ENCODE measurements at regions of chr11 and their contacts with region 1.

Region 1: DNA sequence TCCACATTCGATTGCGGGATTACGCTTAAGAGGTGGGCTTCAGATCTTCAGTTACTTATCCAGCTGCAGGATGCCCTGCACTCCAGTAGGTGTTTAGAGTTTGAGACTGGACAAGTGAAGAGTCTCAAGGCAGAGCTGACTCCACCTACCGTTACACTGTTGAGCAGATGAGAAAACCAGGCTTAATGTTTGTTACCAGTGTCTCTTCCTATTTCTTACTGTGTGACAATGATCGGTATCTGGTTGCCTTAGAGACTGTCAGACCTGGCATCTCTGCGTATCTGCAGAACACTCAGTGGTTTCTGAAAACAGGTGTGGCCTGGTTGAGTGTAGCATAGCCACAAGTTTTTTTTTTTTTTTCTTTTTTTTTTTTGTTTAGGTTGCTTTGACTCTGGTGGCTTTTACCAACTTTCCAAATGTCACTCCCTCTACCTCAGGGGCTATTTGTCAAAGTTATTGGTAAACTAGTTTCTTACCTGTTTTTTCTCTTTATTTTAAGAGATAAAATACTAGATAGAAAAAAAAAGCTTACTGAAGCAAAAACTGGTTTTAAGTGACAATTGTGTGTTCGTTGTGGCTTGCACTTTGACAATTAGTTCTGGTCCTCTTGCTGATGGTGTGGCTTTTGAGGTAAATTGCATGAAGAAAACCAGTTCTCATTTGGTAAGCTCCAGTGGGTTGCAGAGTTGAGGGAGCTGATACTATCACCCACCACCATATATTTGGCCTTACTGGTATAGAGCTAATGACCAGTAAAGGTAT is 284.8 kb downstream of the ETS1 start:
- DNase-seq: peak in 34 of 35 experiments; percentile 47 to 94 (median 74)
- ATAC-seq: peak; percentile 85 to 90 (median 88)
- H3K4me3 ChIP-seq: peak overlapping the region; percentile 56 to 60
- H3K4me3 Mint-ChIP-seq: peak overlapping the region; percentile 83 to 91 (median 84)
- H3K27ac ChIP-seq: peak overlapping the region; percentile 99
- H3K27ac Mint-ChIP-seq: peak overlapping the region; percentile 98
- H3K4me1 ChIP-seq: peaks cover 72 to 80% of the 10 kb centered on the region in 2 experiments
- H3K4me1 Mint-ChIP-seq: peaks cover 90 to 97% (median 95%) of the 10 kb centered on the region in 3 donors
- H3K27me3 ChIP-seq: no peaks in the 10 kb centered on the region
- H3K27me3 Mint-ChIP-seq: no peaks in the 10 kb centered on the region

Region 2: DNA sequence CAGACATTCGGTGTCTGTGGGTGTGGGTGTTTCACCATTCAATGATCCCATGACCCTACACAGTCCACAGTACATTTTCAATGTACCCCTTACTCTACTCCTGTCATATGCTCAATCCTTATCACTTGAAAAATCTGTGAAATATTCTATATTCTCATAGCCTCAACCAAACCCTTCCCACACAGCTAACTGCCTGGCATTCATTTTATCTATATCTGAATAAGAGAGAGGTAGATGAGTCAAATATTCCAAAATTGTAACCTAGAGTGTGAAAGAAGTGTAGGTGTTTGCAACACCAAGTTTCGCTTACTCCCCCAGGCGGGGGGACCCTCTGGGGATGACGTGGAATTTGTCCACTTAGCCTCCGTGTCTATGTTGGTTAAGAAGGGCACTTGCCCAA is 70.0 kb before region 1 on chr11:
- CTCF ChIA-PET with region 1: no interaction called
- POLR2A ChIA-PET with region 1: no interaction called
- DNase-seq: no peak
- ATAC-seq: no peak
- H3K4me3 ChIP-seq: no peak overlapping the region
- H3K4me3 Mint-ChIP-seq: no peak overlapping the region
- H3K27ac ChIP-seq: no peak overlapping the region
- H3K27ac Mint-ChIP-seq: peak overlapping the region in 1 of 2 donors; percentile 14
- H3K4me1 ChIP-seq: no peaks in the 10 kb centered on the region
- H3K4me1 Mint-ChIP-seq: no peaks in the 10 kb centered on the region
- H3K27me3 ChIP-seq: no peaks in the 10 kb centered on the region
- H3K27me3 Mint-ChIP-seq: no peaks in the 10 kb centered on the region

Region 3: GRCh38 chr11:128290106-128290840 is 12.3 kb before region 1 on chr11:
- CTCF ChIA-PET with region 1: interaction called, 4 to 40 read pairs
- POLR2A ChIA-PET with region 1: interaction called, 5 to 52 read pairs
- DNase-seq: peak; percentile 55 to 94 (median 67)
- ATAC-seq: peak; percentile 71 to 75 (median 72)
- H3K4me3 ChIP-seq: peak overlapping the region; percentile 54 to 60
- H3K4me3 Mint-ChIP-seq: peak overlapping the region; percentile 87 to 91 (median 91)
- H3K27ac ChIP-seq: peak overlapping the region; percentile 99
- H3K27ac Mint-ChIP-seq: peak overlapping the region; percentile 98 to 100
- H3K4me1 ChIP-seq: peaks cover 58 to 67% of the 10 kb centered on the region in 2 experiments
- H3K4me1 Mint-ChIP-seq: peaks cover 93 to 100% (median 98%) of the 10 kb centered on the region in 3 donors
- H3K27me3 ChIP-seq: no peaks in the 10 kb centered on the region
- H3K27me3 Mint-ChIP-seq: no peaks in the 10 kb centered on the region

Region 4: GRCh38 chr11:128323381-128323780 is 20.8 kb after region 1 on chr11:
- CTCF ChIA-PET with region 1: interaction called, 6 to 29 read pairs
- POLR2A ChIA-PET with region 1: interaction called, 6 to 35 read pairs
- DNase-seq: peak in 25 of 35 experiments; percentile 25 to 77 (median 45)
- ATAC-seq: peak in 1 of 4 experiments; percentile 12
- H3K4me3 ChIP-seq: no peak overlapping the region
- H3K4me3 Mint-ChIP-seq: peak overlapping the region in 2 of 3 donors; percentile 37 to 71
- H3K27ac ChIP-seq: peak overlapping the region; percentile 98
- H3K27ac Mint-ChIP-seq: peak overlapping the region; percentile 97 to 99
- H3K4me1 ChIP-seq: peaks cover 74 to 83% of the 10 kb centered on the region in 2 experiments
- H3K4me1 Mint-ChIP-seq: peaks cover 87 to 92% (median 90%) of the 10 kb centered on the region in 3 donors
- H3K27me3 ChIP-seq: no peaks in the 10 kb centered on the region
- H3K27me3 Mint-ChIP-seq: no peaks in the 10 kb centered on the region

Region 5: DNA sequence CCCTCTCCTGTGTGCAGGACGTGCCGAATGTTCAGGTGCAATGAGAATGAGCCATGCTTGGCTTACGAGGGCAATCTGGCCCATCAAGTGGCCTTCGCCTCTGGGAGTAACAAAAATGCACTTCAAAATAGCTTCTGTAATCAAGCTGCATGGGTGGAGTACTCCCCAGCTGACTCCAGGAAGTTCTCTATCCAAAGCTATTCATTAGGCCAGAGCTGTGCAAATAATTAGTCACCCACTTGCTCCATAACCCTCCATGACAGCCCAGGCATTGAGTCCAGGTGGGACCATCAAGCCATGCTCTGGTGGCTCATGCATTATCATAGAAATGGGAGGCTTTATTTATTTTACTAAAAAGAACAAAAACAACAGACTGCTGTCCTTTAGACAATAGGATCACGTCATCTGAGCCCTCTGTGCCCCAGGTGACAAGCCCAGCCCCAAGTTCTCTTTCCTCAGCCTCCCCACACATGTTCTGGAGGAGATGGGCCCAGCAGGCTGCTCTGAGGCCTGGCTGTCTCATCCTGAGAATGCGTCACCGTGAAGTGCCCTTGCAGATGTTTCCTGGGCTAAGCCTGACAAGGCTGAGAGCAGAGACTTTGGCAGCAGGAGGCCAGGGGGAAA is 40.0 kb after region 1 on chr11:
- CTCF ChIA-PET with region 1: interaction called in 1 of 2 experiments, 9 read pairs
- POLR2A ChIA-PET with region 1: interaction called in 1 of 2 experiments, 10 read pairs
- DNase-seq: peak in 31 of 35 experiments; percentile 19 to 74 (median 45)
- ATAC-seq: peak; percentile 41 to 71 (median 52)
- H3K4me3 ChIP-seq: no peak overlapping the region
- H3K4me3 Mint-ChIP-seq: peak overlapping the region in 1 of 3 donors; percentile 87
- H3K27ac ChIP-seq: peak overlapping the region; percentile 98
- H3K27ac Mint-ChIP-seq: peak overlapping the region; percentile 98 to 99
- H3K4me1 ChIP-seq: peaks cover 55 to 68% of the 10 kb centered on the region in 2 experiments
- H3K4me1 Mint-ChIP-seq: peaks cover 89 to 95% (median 92%) of the 10 kb centered on the region in 3 donors
- H3K27me3 ChIP-seq: no peaks in the 10 kb centered on the region
- H3K27me3 Mint-ChIP-seq: no peaks in the 10 kb centered on the region

Region 6: GRCh38 chr11:128372977-128373376 is 70.4 kb after region 1 on chr11:
- CTCF ChIA-PET with region 1: no interaction called
- POLR2A ChIA-PET with region 1: interaction called in 1 of 2 experiments, 13 read pairs
- DNase-seq: no peak
- ATAC-seq: no peak
- H3K4me3 ChIP-seq: no peak overlapping the region
- H3K4me3 Mint-ChIP-seq: no peak overlapping the region
- H3K27ac ChIP-seq: no peak overlapping the region
- H3K27ac Mint-ChIP-seq: no peak overlapping the region
- H3K4me1 ChIP-seq: peaks cover 0 to 11% of the 10 kb centered on the region in 2 experiments
- H3K4me1 Mint-ChIP-seq: peaks cover 24 to 37% (median 29%) of the 10 kb centered on the region in 3 donors
- H3K27me3 ChIP-seq: no peaks in the 10 kb centered on the region
- H3K27me3 Mint-ChIP-seq: no peaks in the 10 kb centered on the region

Region 7: DNA sequence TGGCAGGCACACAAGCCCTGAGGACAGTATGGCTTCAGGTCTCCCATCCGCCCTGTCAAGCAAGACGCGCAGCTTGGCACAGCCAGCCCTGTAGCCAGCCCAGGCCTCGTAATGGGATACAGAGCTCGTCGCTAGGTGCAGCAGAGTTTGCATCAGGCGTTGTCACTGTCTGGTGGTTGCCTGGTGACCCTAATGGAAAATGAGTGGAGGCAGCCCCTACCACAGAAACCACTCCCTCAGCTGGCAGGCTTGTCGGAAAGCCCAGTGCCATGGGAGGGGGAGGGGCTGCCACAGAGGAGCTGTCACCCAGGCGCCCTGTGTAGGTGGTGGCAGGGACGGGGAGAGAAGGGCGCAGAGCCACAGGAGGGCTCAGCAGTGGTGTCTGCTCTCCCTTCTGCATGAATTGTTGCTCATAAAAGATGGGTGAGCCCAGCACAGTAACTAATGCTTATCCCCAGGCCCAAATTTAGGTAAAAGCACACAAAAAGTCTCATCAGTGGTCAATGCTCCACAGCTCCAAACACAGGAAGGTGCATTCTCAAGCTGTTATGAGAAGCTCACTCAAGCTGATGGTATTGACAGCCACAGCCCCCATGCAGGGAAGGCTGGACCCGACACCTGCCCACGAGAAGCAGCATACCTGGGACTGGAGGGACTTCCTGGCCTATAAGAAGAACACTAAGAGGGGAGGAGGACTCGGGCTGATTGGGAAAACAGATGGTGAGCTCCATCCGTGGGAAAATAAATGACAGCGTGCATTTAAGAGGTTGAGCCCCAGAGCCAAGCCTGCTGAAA is 120.2 kb after region 1 on chr11:
- CTCF ChIA-PET with region 1: no interaction called
- POLR2A ChIA-PET with region 1: interaction called in 1 of 2 experiments, 10 read pairs
- DNase-seq: peak; percentile 58 to 93 (median 86)
- ATAC-seq: peak; percentile 89 to 93 (median 92)
- H3K4me3 ChIP-seq: peak overlapping the region in 1 of 2 donors; percentile 17
- H3K4me3 Mint-ChIP-seq: peak overlapping the region; percentile 40 to 59 (median 40)
- H3K27ac ChIP-seq: peak overlapping the region; percentile 67
- H3K27ac Mint-ChIP-seq: peak overlapping the region; percentile 80 to 93
- H3K4me1 ChIP-seq: peaks cover 34 to 41% of the 10 kb centered on the region in 2 experiments
- H3K4me1 Mint-ChIP-seq: peaks cover 51 to 55% (median 52%) of the 10 kb centered on the region in 3 donors
- H3K27me3 ChIP-seq: no peaks in the 10 kb centered on the region
- H3K27me3 Mint-ChIP-seq: no peaks in the 10 kb centered on the region

Region 8: GRCh38 chr11:128428935-128429334 is 126.3 kb after region 1 on chr11:
- CTCF ChIA-PET with region 1: no interaction called
- POLR2A ChIA-PET with region 1: interaction called in 1 of 2 experiments, 11 read pairs
- DNase-seq: no peak
- ATAC-seq: no peak
- H3K4me3 ChIP-seq: no peak overlapping the region
- H3K4me3 Mint-ChIP-seq: no peak overlapping the region
- H3K27ac ChIP-seq: no peak overlapping the region
- H3K27ac Mint-ChIP-seq: no peak overlapping the region
- H3K4me1 ChIP-seq: peaks cover 6 to 15% of the 10 kb centered on the region in 2 experiments
- H3K4me1 Mint-ChIP-seq: peaks cover 8 to 30% (median 9%) of the 10 kb centered on the region in 3 donors
- H3K27me3 ChIP-seq: peaks cover 0 to 3% of the 10 kb centered on the region in 2 experiments
- H3K27me3 Mint-ChIP-seq: no peaks in the 10 kb centered on the region